WTC11 (cell line): ENCODE measurements at regions of chr2 and their contacts with region 1.

Region 1: GRCh38 chr2:163573651-163574050 is 162.2 kb downstream of the FIGN start:
- DNase-seq: no peak
- ATAC-seq: no peak
- H3K4me3 Mint-ChIP-seq: no peak overlapping the region
- H3K27ac Mint-ChIP-seq: no peak overlapping the region
- H3K4me1 Mint-ChIP-seq: no peaks in the 10 kb centered on the region
- H3K27me3 Mint-ChIP-seq: no peaks in the 10 kb centered on the region
- CTCF ChIP-seq: no peak

Region 2: GRCh38 chr2:163551616-163552373 is 21.9 kb before region 1 on chr2:
- CTCF ChIA-PET with region 1: no interaction called
- POLR2A ChIA-PET with region 1: interaction called, 12 read pairs
- DNase-seq: no peak
- ATAC-seq: no peak
- H3K4me3 Mint-ChIP-seq: no peak overlapping the region
- H3K27ac Mint-ChIP-seq: no peak overlapping the region
- H3K4me1 Mint-ChIP-seq: no peaks in the 10 kb centered on the region
- H3K27me3 Mint-ChIP-seq: no peaks in the 10 kb centered on the region
- CTCF ChIP-seq: no peak

Region 3: GRCh38 chr2:163591461-163591860 is 17.8 kb after region 1 on chr2:
- CTCF ChIA-PET with region 1: no interaction called
- POLR2A ChIA-PET with region 1: no interaction called
- DNase-seq: no peak
- ATAC-seq: no peak
- H3K4me3 Mint-ChIP-seq: no peak overlapping the region
- H3K27ac Mint-ChIP-seq: no peak overlapping the region
- H3K4me1 Mint-ChIP-seq: peaks cover 35% of the 10 kb centered on the region
- H3K27me3 Mint-ChIP-seq: no peaks in the 10 kb centered on the region
- CTCF ChIP-seq: no peak